ENCODE measurements at regions of chr9 and their contacts with region 1.

Region 1: DNA sequence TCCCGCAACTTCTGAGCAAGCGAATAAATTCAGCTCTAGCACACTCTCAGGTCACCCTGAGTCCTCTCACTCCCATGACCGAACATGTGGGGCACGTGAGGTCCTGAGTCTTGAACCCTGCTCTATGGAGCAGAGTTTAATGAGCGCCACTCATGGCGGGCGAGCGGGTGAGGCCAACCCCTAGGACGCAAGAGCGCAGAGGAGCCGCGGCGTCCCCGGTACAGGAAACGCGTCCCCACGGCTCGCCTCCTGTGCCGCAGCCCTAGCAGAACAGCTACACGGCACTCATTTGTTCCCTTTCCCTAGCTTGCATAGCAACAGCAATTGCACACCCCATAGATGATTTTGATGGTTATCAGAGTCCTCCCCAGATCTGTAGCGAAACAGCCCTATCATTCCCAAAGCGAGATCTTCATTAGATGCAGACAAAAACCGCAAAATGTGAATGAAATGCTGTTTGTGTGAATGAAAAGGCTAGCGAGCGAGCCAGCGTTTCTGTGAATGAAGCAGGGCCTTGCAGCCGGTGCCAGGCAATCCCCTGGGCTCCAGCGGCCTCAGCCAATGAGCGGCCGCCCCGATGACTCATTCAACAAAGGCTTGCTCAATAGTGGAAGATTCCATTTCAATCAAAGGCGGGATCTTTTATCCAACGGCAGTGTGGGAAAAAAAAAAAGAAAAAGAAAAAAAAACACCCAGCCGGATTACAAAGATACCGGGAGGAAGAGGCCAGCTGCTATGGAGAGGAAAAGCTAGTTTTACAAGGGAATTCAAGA is 1.5 kb upstream of the SHC3 start:
- DNase-seq: peak in 1 of 2 donors; percentile 93
- H3K4me3 ChIP-seq: peak overlapping the region; percentile 39 to 61
- H3K27ac ChIP-seq: peak overlapping the region; percentile 89
- H3K4me1 ChIP-seq: peaks cover 20% of the 10 kb centered on the region
- H3K27me3 ChIP-seq: no peaks in the 10 kb centered on the region
- CTCF ChIP-seq: no peak
- POLR2A ChIP-seq: peak in 1 of 2 donors; percentile 66

Region 2: GRCh38 chr9:89000973-89001916 is 178.8 kb before region 1 on chr9:
- intact Hi-C with region 1: loop called (anchors 10 kb)
- DNase-seq: peak; percentile 91 to 94
- H3K4me3 ChIP-seq: no peak overlapping the region
- H3K27ac ChIP-seq: peak overlapping the region; percentile 79
- H3K4me1 ChIP-seq: peaks cover 59% of the 10 kb centered on the region
- H3K27me3 ChIP-seq: no peaks in the 10 kb centered on the region
- CTCF ChIP-seq: peak; percentile 43 to 88 (median 83)
- POLR2A ChIP-seq: no peak

Region 3: DNA sequence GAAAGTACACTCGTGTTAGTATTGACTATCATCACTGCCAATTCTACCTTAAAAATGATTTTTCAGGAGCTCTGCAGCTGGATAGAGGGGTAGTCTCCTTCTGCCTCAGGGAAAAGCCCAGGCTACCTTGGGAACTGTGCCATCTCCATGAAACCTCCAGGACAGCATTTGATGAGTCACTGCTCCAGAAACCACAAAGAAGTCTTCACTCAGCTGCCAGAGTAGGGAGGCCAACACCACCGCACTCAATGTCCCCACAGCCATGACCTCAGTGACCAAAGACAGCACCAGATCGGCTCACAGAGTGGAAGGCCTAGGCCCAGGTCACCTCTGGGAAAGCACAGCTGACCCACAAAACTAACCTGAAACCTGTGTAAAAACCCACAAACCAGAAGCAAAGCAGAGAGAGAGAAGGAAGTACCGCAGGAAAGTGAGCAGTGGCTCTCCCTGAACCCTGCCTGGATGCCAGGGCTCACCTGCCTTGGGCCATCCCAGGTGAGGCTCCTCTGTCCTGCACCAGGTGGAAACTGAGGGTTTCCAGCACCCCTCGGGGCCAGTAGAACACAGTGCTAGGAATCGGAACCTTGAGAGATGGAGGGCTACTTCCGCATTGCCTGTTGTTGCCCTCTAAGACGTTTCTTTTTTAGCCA is 158.8 kb before region 1 on chr9:
- intact Hi-C with region 1: loop called (anchors 10 kb)
- DNase-seq: no peak
- H3K4me3 ChIP-seq: no peak overlapping the region
- H3K27ac ChIP-seq: peak overlapping the region; percentile 92
- H3K4me1 ChIP-seq: peaks cover 32% of the 10 kb centered on the region
- H3K27me3 ChIP-seq: no peaks in the 10 kb centered on the region
- CTCF ChIP-seq: no peak
- POLR2A ChIP-seq: no peak

Region 4: DNA sequence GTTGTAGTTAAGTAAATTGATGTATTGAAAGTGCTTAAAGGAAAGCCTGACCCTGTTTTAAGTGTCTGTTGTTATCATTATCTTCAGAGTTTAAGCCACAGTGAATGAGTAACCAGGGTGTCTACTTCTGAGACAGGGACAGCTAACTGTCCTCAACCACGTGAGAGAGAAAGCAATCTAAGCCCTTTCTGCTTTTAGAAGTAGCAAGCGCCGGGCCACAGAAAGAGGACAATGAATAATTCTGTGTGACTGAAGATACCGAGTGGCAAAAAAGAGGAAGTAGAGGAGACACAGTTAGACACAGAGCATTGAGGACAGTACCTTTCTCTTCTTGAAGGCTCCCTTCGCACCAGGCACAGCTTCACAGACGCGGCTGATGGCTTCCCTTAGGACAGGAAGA is 102.6 kb before region 1 on chr9:
- intact Hi-C with region 1: loop called (anchors 10 kb)
- DNase-seq: peak in 1 of 2 donors; percentile 76
- H3K4me3 ChIP-seq: no peak overlapping the region
- H3K27ac ChIP-seq: peak overlapping the region; percentile 61
- H3K4me1 ChIP-seq: peaks cover 16% of the 10 kb centered on the region
- H3K27me3 ChIP-seq: no peaks in the 10 kb centered on the region
- CTCF ChIP-seq: no peak
- POLR2A ChIP-seq: no peak